CD8-positive, alpha-beta T cell (primary cell): ENCODE measurements at regions of chr17 and their contacts with region 1.

Region 1: DNA sequence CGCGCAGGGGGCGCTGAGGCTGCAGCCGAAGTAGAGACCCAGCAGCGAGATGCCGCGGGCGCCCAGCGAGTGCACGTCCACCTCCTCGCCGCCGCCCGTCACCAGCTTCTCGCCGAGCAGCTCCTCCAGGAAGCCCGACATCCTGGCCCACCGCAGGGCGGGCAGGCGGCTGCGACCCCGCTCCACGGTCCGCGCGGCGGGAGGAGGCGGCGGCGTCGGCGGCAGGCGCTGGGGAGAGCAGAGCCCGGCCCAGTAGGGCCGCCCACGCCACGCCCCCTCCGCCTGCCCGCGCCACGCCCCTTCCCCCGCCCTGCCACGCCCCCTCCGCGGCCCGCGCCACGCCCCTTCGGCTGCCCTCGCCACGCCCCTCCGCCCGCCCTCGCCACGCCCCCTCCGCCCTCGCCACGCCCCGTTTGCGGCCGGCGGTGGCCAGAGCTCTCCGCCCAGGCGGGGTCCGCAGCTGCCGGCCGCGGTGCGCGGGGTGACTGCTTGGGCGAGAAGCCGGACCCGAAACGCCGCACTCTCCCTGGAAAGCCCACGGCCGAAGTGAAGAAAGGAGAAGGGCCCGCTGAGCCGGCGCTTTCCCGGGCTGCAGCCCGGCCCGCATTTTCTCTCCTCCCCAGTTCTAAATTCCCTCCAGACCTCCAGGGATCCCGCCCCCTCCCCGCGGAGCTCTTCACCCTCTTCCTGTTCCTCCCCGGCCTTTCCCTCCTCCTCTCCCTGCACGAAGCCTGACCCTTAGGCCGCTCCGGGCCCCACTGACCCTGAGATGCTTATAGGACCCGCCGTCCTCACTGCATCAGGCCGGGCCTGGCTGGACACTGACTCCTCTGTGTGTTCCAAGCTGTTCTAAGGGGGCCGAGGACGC is at the start of gene NXN:
- DNase-seq: peak; percentile 81 to 96 (median 90)
- ATAC-seq: peak; percentile 86
- H3K4me3 ChIP-seq: peak within 1 kb of the TSS; percentile 53 to 58
- H3K4me3 Mint-ChIP-seq: peak within 1 kb of the TSS; percentile 78
- H3K27ac ChIP-seq: no peak within 1 kb of the TSS
- H3K27ac Mint-ChIP-seq: peak within 1 kb of the TSS; percentile 15
- H3K4me1 ChIP-seq: peaks cover 18% of the 10 kb centered on the region
- H3K4me1 Mint-ChIP-seq: peaks cover 19% of the 10 kb centered on the region
- H3K27me3 ChIP-seq: peaks cover 16 to 17% of the 10 kb centered on the region in 2 experiments
- H3K27me3 Mint-ChIP-seq: peaks cover 32% of the 10 kb centered on the region
- CTCF ChIP-seq: no peak
- total RNA-seq, gene NXN: 0.17 to 0.95 TPM

Region 2: GRCh38 chr17:705863-706262 is 273.9 kb before region 1 on chr17:
- CTCF ChIA-PET with region 1: interaction called, 7 read pairs
- POLR2A ChIA-PET with region 1: no interaction called
- intact Hi-C with region 1: loop called in 1 of 2 experiments (anchors 5 kb)
- DNase-seq: no peak
- ATAC-seq: no peak
- H3K4me3 ChIP-seq: no peak overlapping the region
- H3K4me3 Mint-ChIP-seq: no peak overlapping the region
- H3K27ac ChIP-seq: no peak overlapping the region
- H3K27ac Mint-ChIP-seq: no peak overlapping the region
- H3K4me1 ChIP-seq: no peaks in the 10 kb centered on the region
- H3K4me1 Mint-ChIP-seq: peaks cover 18% of the 10 kb centered on the region
- H3K27me3 ChIP-seq: no peaks in the 10 kb centered on the region
- H3K27me3 Mint-ChIP-seq: no peaks in the 10 kb centered on the region
- CTCF ChIP-seq: no peak

Region 3: GRCh38 chr17:781805-782731 is 197.7 kb before region 1 on chr17 and contains the starts of genes GLOD4 and MRM3:
- CTCF ChIA-PET with region 1: interaction called, 6 read pairs
- POLR2A ChIA-PET with region 1: interaction called, 13 read pairs
- intact Hi-C with region 1: loop called (anchors 1 to 5 kb)
- DNase-seq: peak; percentile 91 to 99 (median 95)
- ATAC-seq: peak; percentile 94
- H3K4me3 ChIP-seq: peak within 1 kb of the TSS; percentile 92 to 100
- H3K4me3 Mint-ChIP-seq: peak within 1 kb of the TSS; percentile 97
- H3K27ac ChIP-seq: peak within 1 kb of the TSS; percentile 94 to 97
- H3K27ac Mint-ChIP-seq: peak within 1 kb of the TSS; percentile 97
- H3K4me1 ChIP-seq: peaks cover 28% of the 10 kb centered on the region
- H3K4me1 Mint-ChIP-seq: peaks cover 34% of the 10 kb centered on the region
- H3K27me3 ChIP-seq: no peaks in the 10 kb centered on the region
- H3K27me3 Mint-ChIP-seq: no peaks in the 10 kb centered on the region
- CTCF ChIP-seq: no peak
- total RNA-seq, gene GLOD4: 80.7 to 86.2 TPM
- total RNA-seq, gene MRM3: 47.4 to 49.7 TPM

Region 4: GRCh38 chr17:879549-880442 is 100.0 kb before region 1 on chr17:
- CTCF ChIA-PET with region 1: interaction called, 35 read pairs
- POLR2A ChIA-PET with region 1: interaction called, 3 read pairs
- intact Hi-C with region 1: loop called in 1 of 2 experiments (anchors 1 kb)
- DNase-seq: peak; percentile 29 to 81 (median 64)
- ATAC-seq: peak; percentile 68
- H3K4me3 ChIP-seq: no peak overlapping the region
- H3K4me3 Mint-ChIP-seq: no peak overlapping the region
- H3K27ac ChIP-seq: no peak overlapping the region
- H3K27ac Mint-ChIP-seq: no peak overlapping the region
- H3K4me1 ChIP-seq: peaks cover 6% of the 10 kb centered on the region
- H3K4me1 Mint-ChIP-seq: peaks cover 10% of the 10 kb centered on the region
- H3K27me3 ChIP-seq: peaks cover 0 to 4% of the 10 kb centered on the region in 2 experiments
- H3K27me3 Mint-ChIP-seq: peaks cover 35% of the 10 kb centered on the region
- CTCF ChIP-seq: peak; percentile 56